ENCODE measurements at regions of chrX and their contacts with region 1.

Region 1: DNA sequence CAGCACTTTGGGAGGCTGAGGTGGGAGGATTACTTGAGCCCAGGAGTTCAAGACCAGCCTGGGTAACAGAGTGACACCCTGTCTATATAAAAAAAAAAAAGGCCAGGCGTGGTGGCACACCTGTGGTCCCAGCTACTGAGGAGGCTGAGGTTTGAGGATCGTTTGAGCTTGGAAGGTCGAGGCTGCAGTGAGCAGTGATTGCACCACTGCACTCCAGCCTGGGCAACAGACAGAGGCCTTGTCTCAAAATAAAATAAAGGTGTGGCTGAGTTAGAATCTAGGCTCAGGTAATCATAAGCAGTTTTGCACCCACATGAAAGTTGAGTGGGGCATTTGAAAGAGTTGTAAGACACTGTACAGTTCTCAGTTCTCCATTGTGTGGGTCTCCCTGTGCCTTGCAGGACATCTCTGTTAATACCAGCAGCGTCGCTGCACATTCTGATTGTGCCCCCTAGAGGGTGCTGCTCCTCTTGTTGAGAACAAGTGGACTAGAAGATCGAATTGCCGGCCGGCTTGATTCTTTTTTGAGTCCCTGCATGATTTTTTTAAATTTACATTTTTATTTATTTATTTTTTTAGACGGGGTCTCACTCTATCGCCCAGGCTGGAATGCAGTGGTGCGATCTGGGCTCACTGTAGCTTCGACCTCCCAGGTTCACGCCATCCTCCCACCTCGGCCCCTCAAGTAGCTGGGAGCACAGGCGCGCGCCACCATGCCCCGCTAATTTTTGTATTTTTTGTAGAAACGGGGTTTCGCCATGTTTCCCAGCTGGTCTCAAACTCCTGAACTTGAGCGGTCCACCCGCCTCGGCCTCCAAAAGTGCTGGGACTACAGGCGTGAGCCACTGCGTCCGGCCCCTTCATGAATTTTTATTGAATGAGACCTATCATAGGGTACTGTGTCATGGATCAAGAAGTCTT is 73.6 kb upstream of the RBMX start:
- DNase-seq: peak; percentile 54
- ATAC-seq: peak; percentile 49
- H3K4me3 ChIP-seq: no peak overlapping the region
- H3K4me3 Mint-ChIP-seq: no peak overlapping the region
- H3K27ac ChIP-seq: no peak overlapping the region
- H3K27ac Mint-ChIP-seq: no peak overlapping the region
- H3K4me1 ChIP-seq: no peaks in the 10 kb centered on the region
- H3K4me1 Mint-ChIP-seq: peaks cover 1% of the 10 kb centered on the region
- H3K27me3 ChIP-seq: no peaks in the 10 kb centered on the region
- H3K27me3 Mint-ChIP-seq: no peaks in the 10 kb centered on the region
- CTCF ChIP-seq: peak; percentile 58

Region 2: GRCh38 chrX:136933611-136934145 is 20.4 kb before region 1 on chrX:
- CTCF ChIA-PET with region 1: no interaction called
- POLR2A ChIA-PET with region 1: no interaction called
- intact Hi-C with region 1: no loop called
- DNase-seq: no peak
- ATAC-seq: no peak
- H3K4me3 ChIP-seq: no peak overlapping the region
- H3K4me3 Mint-ChIP-seq: no peak overlapping the region
- H3K27ac ChIP-seq: no peak overlapping the region
- H3K27ac Mint-ChIP-seq: no peak overlapping the region
- H3K4me1 ChIP-seq: no peaks in the 10 kb centered on the region
- H3K4me1 Mint-ChIP-seq: no peaks in the 10 kb centered on the region
- H3K27me3 ChIP-seq: no peaks in the 10 kb centered on the region
- H3K27me3 Mint-ChIP-seq: no peaks in the 10 kb centered on the region
- CTCF ChIP-seq: no peak

Region 3: DNA sequence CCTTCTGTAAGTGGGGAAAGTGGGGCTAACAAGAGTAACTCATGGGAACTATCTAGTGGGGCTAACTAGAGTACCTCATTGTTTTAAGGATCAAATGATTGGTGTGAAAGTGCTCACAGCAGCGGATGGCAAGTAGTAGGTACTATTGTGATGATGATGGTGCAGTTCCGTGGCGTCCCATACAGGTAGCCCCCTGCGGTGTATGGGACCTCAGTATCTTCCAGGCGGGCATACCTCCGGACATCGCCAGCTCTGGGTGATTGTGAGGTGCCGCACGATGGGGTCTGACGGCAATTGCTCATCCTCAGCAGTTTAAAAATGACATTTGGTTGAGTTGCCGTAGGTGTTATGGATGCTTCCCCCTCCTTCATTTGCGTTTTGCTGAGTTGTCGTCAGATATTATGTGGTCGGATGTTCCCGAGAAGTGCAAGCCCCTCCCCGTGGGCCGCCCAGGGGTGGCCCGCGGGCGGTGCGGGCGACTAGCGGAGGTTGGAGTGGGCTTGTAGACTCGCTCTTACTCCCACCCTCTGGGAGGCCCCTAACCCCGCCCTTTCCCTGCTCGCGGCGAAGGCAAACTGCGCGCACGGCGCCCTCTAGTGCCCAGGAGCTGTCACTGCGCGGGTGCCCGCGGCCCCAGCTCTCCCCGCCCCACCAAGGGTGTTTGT is 98.0 kb after region 1 on chrX:
- CTCF ChIA-PET with region 1: interaction called, 5 read pairs
- POLR2A ChIA-PET with region 1: no interaction called
- intact Hi-C with region 1: loop called (anchors 1 kb)
- DNase-seq: peak; percentile 77
- ATAC-seq: peak; percentile 95
- H3K4me3 ChIP-seq: peak overlapping the region; percentile 34 to 54 (median 48)
- H3K4me3 Mint-ChIP-seq: peak overlapping the region; percentile 93
- H3K27ac ChIP-seq: no peak overlapping the region
- H3K27ac Mint-ChIP-seq: no peak overlapping the region
- H3K4me1 ChIP-seq: peaks cover 6 to 14% of the 10 kb centered on the region in 2 donors
- H3K4me1 Mint-ChIP-seq: peaks cover 16% of the 10 kb centered on the region
- H3K27me3 ChIP-seq: peaks cover 0 to 32% (median 15%) of the 10 kb centered on the region in 4 experiments
- H3K27me3 Mint-ChIP-seq: peaks cover 41% of the 10 kb centered on the region
- CTCF ChIP-seq: peak; percentile 76

Region 4: DNA sequence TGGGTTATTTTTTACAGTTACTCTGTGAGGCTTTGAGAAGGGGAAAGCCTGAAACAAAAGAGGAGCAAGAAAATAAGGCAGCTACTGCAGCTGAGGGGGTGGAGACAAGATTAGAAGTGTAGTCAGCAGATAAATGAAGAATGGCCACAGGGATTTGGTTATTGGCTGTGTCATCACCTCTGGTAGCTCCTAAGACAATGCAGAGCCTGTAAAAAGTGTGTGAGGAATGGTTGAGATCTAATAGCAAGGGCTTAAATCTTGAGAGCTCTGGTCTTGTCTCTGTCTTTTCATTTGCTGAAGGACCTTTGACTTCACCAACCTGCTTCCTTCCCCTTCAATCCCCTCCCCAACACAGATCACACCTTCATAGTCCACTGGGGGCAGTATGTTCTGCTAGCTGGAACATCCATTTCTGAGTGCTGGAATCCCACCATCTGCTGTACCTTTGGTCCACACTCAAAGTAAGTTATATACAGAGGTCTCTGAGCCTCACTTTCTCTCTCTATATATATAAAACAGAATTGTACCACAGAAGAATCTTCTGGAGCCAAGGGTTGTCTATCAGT is 398.1 kb after region 1 on chrX:
- CTCF ChIA-PET with region 1: no interaction called
- POLR2A ChIA-PET with region 1: no interaction called
- intact Hi-C with region 1: no loop called
- DNase-seq: no peak
- ATAC-seq: no peak
- H3K4me3 ChIP-seq: no peak overlapping the region
- H3K4me3 Mint-ChIP-seq: no peak overlapping the region
- H3K27ac ChIP-seq: no peak overlapping the region
- H3K27ac Mint-ChIP-seq: no peak overlapping the region
- H3K4me1 ChIP-seq: no peaks in the 10 kb centered on the region
- H3K4me1 Mint-ChIP-seq: no peaks in the 10 kb centered on the region
- H3K27me3 ChIP-seq: no peaks in the 10 kb centered on the region
- H3K27me3 Mint-ChIP-seq: no peaks in the 10 kb centered on the region
- CTCF ChIP-seq: no peak

Region 5: GRCh38 chrX:138745196-138745595 is 1791.1 kb after region 1 on chrX:
- CTCF ChIA-PET with region 1: interaction called, 3 read pairs
- POLR2A ChIA-PET with region 1: no interaction called
- intact Hi-C with region 1: loop called (anchors 10 kb)
- DNase-seq: peak; percentile 32
- ATAC-seq: no peak
- H3K4me3 ChIP-seq: no peak overlapping the region
- H3K4me3 Mint-ChIP-seq: no peak overlapping the region
- H3K27ac ChIP-seq: no peak overlapping the region
- H3K27ac Mint-ChIP-seq: no peak overlapping the region
- H3K4me1 ChIP-seq: no peaks in the 10 kb centered on the region
- H3K4me1 Mint-ChIP-seq: no peaks in the 10 kb centered on the region
- H3K27me3 ChIP-seq: no peaks in the 10 kb centered on the region
- H3K27me3 Mint-ChIP-seq: no peaks in the 10 kb centered on the region
- CTCF ChIP-seq: peak; percentile 61